Panc1 (cell line): ENCODE measurements at regions of chr12 and their contacts with region 1.

Region 1: GRCh38 chr12:6478416-6478815 is 7.9 kb upstream of the VAMP1 start:
- DNase-seq: no peak
- ATAC-seq: no peak
- H3K4me3 ChIP-seq: no peak overlapping the region
- H3K27ac ChIP-seq: no peak overlapping the region
- H3K4me1 ChIP-seq: no peaks in the 10 kb centered on the region
- H3K27me3 ChIP-seq: no peaks in the 10 kb centered on the region
- CTCF ChIP-seq: no peak

Region 2: GRCh38 chr12:5083955-5084849 is 1394.2 kb before region 1 on chr12:
- CTCF ChIA-PET with region 1: no interaction called
- POLR2A ChIA-PET with region 1: no interaction called
- in situ Hi-C with region 1: no loop called
- intact Hi-C with region 1: no loop called
- DNase-seq: peak; percentile 35
- ATAC-seq: no peak
- H3K4me3 ChIP-seq: no peak overlapping the region
- H3K27ac ChIP-seq: no peak overlapping the region
- H3K4me1 ChIP-seq: no peaks in the 10 kb centered on the region
- H3K27me3 ChIP-seq: peaks cover 2% of the 10 kb centered on the region; the same call in 1 of the 2 replicates
- CTCF ChIP-seq: peak; percentile 70

Region 3: DNA sequence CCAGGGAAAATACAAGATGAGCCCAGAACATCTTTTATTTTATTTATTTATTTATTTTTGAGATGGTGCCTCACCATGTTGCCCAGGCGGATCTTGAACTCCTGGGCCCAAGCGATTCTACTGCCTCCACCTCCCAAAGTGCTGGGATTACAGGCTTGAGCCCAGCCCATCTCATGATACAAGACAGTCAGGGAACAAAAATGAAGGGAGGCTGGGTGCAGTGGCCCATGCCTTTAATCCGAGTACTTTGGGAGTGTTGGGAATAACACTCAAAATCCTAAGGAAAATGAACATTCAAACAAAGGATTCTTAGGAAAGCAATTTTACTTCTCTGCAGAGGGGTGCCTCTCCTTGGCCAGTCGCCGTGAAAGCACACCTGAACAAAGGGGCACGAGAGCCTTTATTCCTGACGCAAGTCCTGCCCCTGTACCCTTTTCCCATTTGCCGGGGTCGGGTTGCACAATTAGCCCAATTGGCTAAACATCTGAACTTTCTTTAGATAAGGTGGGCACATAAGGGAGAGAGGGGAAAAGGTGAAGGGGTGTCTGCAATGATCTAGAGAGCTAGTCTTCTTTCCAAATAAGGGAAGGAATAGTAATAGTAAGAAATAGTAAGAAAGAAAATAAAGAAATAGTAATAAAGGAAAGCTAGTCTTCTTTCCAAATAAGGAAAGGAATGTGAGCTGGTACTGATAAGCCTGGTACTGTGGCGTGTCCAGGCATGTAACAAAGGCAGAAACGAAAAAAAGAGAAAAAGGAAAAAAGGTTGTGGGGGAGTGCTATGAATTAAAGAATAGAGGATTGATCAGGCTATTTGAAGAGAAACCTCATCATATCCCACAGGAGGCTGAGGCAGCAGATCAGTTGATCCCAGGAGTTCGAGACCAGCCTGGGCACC is 28.9 kb after region 1 on chr12:
- CTCF ChIA-PET with region 1: no interaction called
- POLR2A ChIA-PET with region 1: no interaction called
- in situ Hi-C with region 1: no loop called
- intact Hi-C with region 1: no loop called
- DNase-seq: no peak
- ATAC-seq: no peak
- H3K4me3 ChIP-seq: no peak overlapping the region
- H3K27ac ChIP-seq: no peak overlapping the region
- H3K4me1 ChIP-seq: no peaks in the 10 kb centered on the region
- H3K27me3 ChIP-seq: no peaks in the 10 kb centered on the region
- CTCF ChIP-seq: no peak

Region 4: DNA sequence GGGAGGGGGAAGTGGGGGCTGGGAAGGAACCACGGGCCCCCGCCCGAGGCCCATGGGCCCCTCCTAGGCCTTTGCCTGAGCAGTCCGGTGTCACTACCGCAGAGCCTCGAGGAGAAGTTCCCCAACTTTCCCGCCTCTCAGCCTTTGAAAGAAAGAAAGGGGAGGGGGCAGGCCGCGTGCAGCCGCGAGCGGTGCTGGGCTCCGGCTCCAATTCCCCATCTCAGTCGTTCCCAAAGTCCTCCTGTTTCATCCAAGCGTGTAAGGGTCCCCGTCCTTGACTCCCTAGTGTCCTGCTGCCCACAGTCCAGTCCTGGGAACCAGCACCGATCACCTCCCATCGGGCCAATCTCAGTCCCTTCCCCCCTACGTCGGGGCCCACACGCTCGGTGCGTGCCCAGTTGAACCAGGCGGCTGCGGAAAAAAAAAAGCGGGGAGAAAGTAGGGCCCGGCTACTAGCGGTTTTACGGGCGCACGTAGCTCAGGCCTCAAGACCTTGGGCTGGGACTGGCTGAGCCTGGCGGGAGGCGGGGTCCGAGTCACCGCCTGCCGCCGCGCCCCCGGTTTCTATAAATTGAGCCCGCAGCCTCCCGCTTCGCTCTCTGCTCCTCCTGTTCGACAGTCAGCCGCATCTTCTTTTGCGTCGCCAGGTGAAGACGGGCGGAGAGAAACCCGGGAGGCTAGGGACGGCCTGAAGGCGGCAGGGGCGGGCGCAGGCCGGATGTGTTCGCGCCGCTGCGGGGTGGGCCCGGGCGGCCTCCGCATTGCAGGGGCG is 55.7 kb after region 1 on chr12 and contains the start of gene GAPDH:
- CTCF ChIA-PET with region 1: no interaction called
- POLR2A ChIA-PET with region 1: no interaction called
- in situ Hi-C with region 1: no loop called
- intact Hi-C with region 1: no loop called
- DNase-seq: peak; percentile 75
- ATAC-seq: peak; percentile 62
- H3K4me3 ChIP-seq: peak within 1 kb of the TSS; percentile 77 to 86
- H3K27ac ChIP-seq: peak within 1 kb of the TSS; percentile 95
- H3K4me1 ChIP-seq: peaks cover 44% of the 10 kb centered on the region
- H3K27me3 ChIP-seq: no peaks in the 10 kb centered on the region
- CTCF ChIP-seq: no peak
- total RNA-seq, gene GAPDH: 2,912 TPM

Region 5: GRCh38 chr12:6551496-6552139 is 73.2 kb after region 1 on chr12:
- CTCF ChIA-PET with region 1: interaction called, 15 read pairs
- POLR2A ChIA-PET with region 1: no interaction called
- in situ Hi-C with region 1: no loop called
- intact Hi-C with region 1: no loop called
- DNase-seq: no peak
- ATAC-seq: no peak
- H3K4me3 ChIP-seq: no peak overlapping the region
- H3K27ac ChIP-seq: no peak overlapping the region
- H3K4me1 ChIP-seq: no peaks in the 10 kb centered on the region
- H3K27me3 ChIP-seq: no peaks in the 10 kb centered on the region
- CTCF ChIP-seq: no peak